Calu3 (cell line): ENCODE measurements at regions of chr12 and their contacts with region 1.

Region 1: GRCh38 chr12:124567661-124568373 is 405 bp upstream of the NCOR2 start:
- DNase-seq: peak; percentile 88
- H3K4me3 Mint-ChIP-seq: peak overlapping the region; percentile 87
- H3K27ac Mint-ChIP-seq: peak overlapping the region; percentile 56
- H3K4me1 Mint-ChIP-seq: no peaks in the 10 kb centered on the region
- H3K27me3 Mint-ChIP-seq: no peaks in the 10 kb centered on the region
- CTCF ChIP-seq: no peak

Region 2: DNA sequence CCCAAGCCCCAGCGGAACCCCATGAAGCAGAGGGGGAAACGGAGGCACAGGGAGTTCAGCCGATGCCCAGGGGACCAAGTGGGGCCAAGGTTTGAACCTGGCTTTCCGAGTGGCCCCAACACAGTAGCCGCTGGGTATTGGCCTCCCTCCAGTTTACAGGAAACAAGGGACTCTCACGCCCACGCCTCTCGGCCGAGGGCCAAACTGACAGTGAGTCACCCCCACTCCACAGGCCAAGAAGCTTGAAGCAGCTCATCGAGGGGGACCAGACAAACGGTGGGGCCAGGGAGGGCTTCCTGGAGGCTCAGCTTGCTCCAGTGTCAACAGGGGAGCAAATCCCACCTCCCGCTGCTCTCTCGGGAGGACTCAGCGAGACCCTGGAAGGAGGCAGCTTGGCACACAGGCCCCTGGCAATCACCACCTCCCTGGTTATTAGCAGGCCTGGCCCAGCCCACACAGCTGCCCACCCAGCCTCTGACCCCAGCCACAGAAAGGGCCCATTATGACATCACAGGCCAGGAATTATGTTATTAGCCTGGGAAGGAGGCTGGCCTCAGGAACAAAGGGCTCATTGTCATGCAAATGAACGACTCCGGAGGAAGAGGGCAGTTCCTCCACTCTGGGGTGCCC is 55.0 kb before region 1 on chr12:
- CTCF ChIA-PET with region 1: no interaction called
- intact Hi-C with region 1: loop called (anchors 5 kb)
- DNase-seq: peak; percentile 98
- H3K4me3 Mint-ChIP-seq: peak overlapping the region; percentile 31
- H3K27ac Mint-ChIP-seq: peak overlapping the region; percentile 78
- H3K4me1 Mint-ChIP-seq: peaks cover 74% of the 10 kb centered on the region
- H3K27me3 Mint-ChIP-seq: no peaks in the 10 kb centered on the region
- CTCF ChIP-seq: no peak

Region 3: GRCh38 chr12:124720004-124720680 is 152.3 kb after region 1 on chr12:
- CTCF ChIA-PET with region 1: no interaction called
- intact Hi-C with region 1: loop called (anchors 5 kb)
- DNase-seq: no peak
- H3K4me3 Mint-ChIP-seq: no peak overlapping the region
- H3K27ac Mint-ChIP-seq: peak overlapping the region; percentile 2
- H3K4me1 Mint-ChIP-seq: peaks cover 43% of the 10 kb centered on the region
- H3K27me3 Mint-ChIP-seq: no peaks in the 10 kb centered on the region
- CTCF ChIP-seq: peak; percentile 18